ENCODE measurements at regions of chr12 and their contacts with region 1.

Region 1: GRCh38 chr12:109880016-109880931 is at the start of gene GLTP:
- DNase-seq: peak; percentile 69 to 93
- H3K4me3 ChIP-seq: peak within 1 kb of the TSS; percentile 79
- H3K27ac ChIP-seq: peak within 1 kb of the TSS; percentile 56
- H3K4me1 ChIP-seq: peaks cover 88% of the 10 kb centered on the region
- H3K27me3 ChIP-seq: no peaks in the 10 kb centered on the region
- CTCF ChIP-seq: no peak
- total RNA-seq, gene GLTP: 30.3 and 31.8 TPM in 2 replicates

Region 2: GRCh38 chr12:109804820-109805761 is 75.2 kb before region 1 on chr12:
- CTCF ChIA-PET with region 1: no interaction called
- POLR2A ChIA-PET with region 1: no interaction called
- intact Hi-C with region 1: loop called (anchors 1 kb)
- DNase-seq: peak; percentile 48 to 59
- H3K4me3 ChIP-seq: no peak overlapping the region
- H3K27ac ChIP-seq: no peak overlapping the region
- H3K4me1 ChIP-seq: no peaks in the 10 kb centered on the region
- H3K27me3 ChIP-seq: no peaks in the 10 kb centered on the region
- CTCF ChIP-seq: peak; percentile 98

Region 3: GRCh38 chr12:109858764-109859163 is 21.5 kb before region 1 on chr12:
- CTCF ChIA-PET with region 1: interaction called, 5 read pairs
- POLR2A ChIA-PET with region 1: interaction called, 7 read pairs
- intact Hi-C with region 1: loop called (anchors 1 kb)
- DNase-seq: no peak
- H3K4me3 ChIP-seq: no peak overlapping the region
- H3K27ac ChIP-seq: no peak overlapping the region
- H3K4me1 ChIP-seq: peaks cover 8% of the 10 kb centered on the region
- H3K27me3 ChIP-seq: no peaks in the 10 kb centered on the region
- CTCF ChIP-seq: no peak

Region 4: DNA sequence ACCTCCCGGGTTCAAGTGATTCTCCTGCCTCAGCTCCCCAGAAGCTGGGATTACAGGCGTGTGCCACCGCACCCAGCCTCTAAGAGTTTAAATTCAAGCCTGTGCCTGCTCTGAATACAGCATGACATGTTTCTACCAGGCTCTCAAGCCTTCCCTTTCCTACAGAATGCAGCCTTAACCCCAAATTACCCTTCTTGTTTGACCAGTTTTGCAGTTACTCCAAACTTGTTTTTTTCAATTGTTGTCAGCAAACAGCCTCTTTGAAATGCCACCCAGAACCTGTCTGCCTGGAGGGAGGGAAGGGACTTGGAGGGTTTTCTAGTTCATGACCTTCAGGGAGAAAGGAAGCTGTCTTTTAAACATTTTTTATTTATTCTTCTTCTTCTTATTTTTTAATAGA is 15.3 kb before region 1 on chr12:
- CTCF ChIA-PET with region 1: no interaction called
- POLR2A ChIA-PET with region 1: no interaction called
- intact Hi-C with region 1: loop called (anchors 1 kb)
- DNase-seq: peak; percentile 51 to 93
- H3K4me3 ChIP-seq: no peak overlapping the region; the same call in 1 of the 2 replicates
- H3K27ac ChIP-seq: peak overlapping the region; percentile 74
- H3K4me1 ChIP-seq: peaks cover 37% of the 10 kb centered on the region
- H3K27me3 ChIP-seq: no peaks in the 10 kb centered on the region
- CTCF ChIP-seq: no peak

Region 5: DNA sequence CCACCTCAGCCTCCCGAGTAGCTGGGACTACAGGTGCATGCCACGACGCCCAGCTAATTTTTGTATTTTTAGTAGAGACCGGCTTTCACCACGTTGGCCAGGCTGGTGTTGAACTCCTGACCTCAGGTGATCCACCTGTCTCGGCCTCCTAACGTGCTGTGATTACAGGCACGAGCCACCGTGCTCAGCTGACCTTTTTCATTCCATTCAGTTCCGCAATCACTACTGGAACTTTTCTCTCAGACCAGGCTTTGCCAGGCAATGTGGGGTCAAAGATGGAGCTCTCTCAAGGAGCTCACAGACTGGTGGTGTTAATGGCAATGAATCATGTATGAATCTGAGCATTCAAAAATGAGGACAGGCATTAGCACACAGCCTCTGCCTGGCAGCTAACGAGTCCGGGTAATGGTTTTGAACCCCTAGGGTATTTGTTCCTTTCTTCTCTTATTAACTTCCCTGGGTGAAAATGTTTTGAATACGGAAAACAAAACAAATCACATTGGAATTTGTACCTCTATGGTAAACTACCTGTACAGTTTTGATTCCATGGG is 10.4 kb after region 1 on chr12:
- CTCF ChIA-PET with region 1: no interaction called
- POLR2A ChIA-PET with region 1: no interaction called
- intact Hi-C with region 1: no loop called
- DNase-seq: no peak
- H3K4me3 ChIP-seq: no peak overlapping the region
- H3K27ac ChIP-seq: no peak overlapping the region
- H3K4me1 ChIP-seq: peaks cover 34% of the 10 kb centered on the region
- H3K27me3 ChIP-seq: no peaks in the 10 kb centered on the region
- CTCF ChIP-seq: no peak

Measured in PC-9 (cell line).